Activated CD4-positive, alpha-beta T cell treated with anti-CD3 and anti-CD28 coated beads, Interleukin-2, amount 10 ng/mL, durations not matched to agents 24 days and 14 days (primary cell): ENCODE measurements at regions of chr2 and their contacts with region 1.

Region 1: GRCh38 chr2:99141110-99142108 is at the start of gene C2orf15:
- DNase-seq: peak; percentile 98
- H3K4me3 Mint-ChIP-seq: peak within 1 kb of the TSS; percentile 95
- H3K27ac Mint-ChIP-seq: peak within 1 kb of the TSS; percentile 91
- H3K4me1 Mint-ChIP-seq: peaks cover 22% of the 10 kb centered on the region
- H3K27me3 Mint-ChIP-seq: peaks cover 29% of the 10 kb centered on the region
- total RNA-seq, gene C2orf15: 0.26 and 0.40 TPM in 2 replicates

Region 2: GRCh38 chr2:99154643-99155536 is 13.5 kb after region 1 on chr2 and contains the starts of genes LIPT1 and TSGA10:
- intact Hi-C with region 1: loop called (anchors 1 kb)
- DNase-seq: peak; percentile 98
- H3K4me3 Mint-ChIP-seq: no peak within 1 kb of the TSS
- H3K27ac Mint-ChIP-seq: peak within 1 kb of the TSS; percentile 83
- H3K4me1 Mint-ChIP-seq: peaks cover 35% of the 10 kb centered on the region
- H3K27me3 Mint-ChIP-seq: no peaks in the 10 kb centered on the region
- total RNA-seq, gene LIPT1: 3.3 and 3.9 TPM in 2 replicates
- total RNA-seq, gene TSGA10: 3.2 and 3.7 TPM in 2 replicates

Region 3: DNA sequence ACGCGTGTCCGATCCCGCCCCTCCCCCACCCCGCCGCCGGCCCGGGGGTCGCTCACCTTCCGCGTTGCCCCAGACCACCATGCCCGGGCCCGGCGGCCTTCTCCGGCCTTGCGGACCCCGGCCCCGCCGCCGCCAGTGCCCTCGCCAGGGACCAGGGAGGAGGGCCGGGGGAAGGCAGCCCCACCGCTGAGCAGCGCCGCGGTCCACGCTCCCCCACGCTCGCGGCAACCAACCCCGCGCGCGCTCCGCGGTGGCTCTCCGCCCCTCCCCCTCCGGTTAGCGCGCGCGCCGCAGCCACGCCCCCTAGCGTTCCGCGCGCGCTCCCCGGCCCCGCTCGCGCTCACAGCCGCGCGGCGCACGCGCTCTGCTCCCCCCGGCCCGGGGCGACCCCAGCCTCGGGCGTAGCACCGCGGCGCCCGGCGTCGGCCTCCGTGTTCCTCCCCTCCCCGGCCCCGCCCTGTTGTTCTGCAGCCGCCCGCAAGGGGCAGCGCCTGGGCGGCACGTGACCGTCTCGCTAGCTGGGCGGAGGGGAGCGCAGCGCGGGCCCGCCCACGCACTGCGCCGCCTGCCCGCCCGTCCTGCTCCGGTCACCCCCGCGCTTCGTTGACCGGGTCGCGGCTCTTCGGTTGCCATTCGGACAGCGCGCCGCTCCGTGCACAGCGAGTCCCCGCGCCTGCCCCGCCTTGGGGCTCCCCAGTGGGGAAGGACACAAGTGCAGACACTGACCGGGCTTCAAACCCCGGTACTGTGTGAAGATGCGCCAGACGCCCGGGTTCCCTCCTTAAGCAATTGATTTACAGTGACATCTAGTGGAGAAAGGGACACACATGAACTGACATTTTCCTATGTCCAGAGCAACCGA is 348.6 kb after region 1 on chr2 and contains the start of gene REV1:
- intact Hi-C with region 1: loop called (anchors 2 kb)
- DNase-seq: peak; percentile 97
- H3K4me3 Mint-ChIP-seq: peak within 1 kb of the TSS; percentile 92
- H3K27ac Mint-ChIP-seq: peak within 1 kb of the TSS; percentile 95
- H3K4me1 Mint-ChIP-seq: peaks cover 25% of the 10 kb centered on the region
- H3K27me3 Mint-ChIP-seq: no peaks in the 10 kb centered on the region
- total RNA-seq, gene REV1: 47.8 and 48.9 TPM in 2 replicates